AG04450 (cell line): ENCODE measurements at regions of chr14 and their contacts with region 1.

Region 1: DNA sequence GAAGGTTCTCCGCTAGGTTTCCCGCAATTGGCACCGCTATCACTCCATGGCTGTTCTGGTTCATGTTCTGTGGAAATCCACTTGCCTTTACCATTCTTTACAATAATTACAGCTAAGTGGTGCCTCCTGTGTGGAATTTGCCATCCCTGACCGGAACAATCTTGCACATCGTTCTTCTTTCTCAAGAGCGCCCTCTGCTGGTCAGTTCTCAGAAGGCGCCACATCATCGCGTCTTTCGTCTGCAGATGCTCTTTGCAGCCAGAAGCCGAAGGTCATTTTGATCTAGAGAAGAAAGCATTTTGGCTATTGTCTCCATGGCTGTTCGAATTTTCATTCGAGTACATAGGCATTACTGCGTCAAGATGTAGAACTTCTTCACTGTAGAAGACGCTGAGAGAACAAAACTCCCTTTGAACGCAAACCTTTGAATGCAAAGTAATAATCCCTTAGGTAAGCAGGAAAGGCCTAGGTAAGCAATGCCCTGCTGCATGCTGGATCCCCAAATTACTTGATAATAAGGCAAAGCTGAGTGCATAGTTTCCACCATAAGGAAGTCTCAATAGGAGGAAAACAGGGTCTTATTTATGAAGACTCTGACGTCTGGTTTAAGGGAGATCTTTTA is 10.1 kb upstream of the RTRAF start:
- DNase-seq: peak; percentile 55
- H3K4me3 ChIP-seq: no peak overlapping the region
- H3K27ac ChIP-seq: no peak overlapping the region
- H3K27me3 ChIP-seq: peaks cover 2% of the 10 kb centered on the region
- CTCF ChIP-seq: peak; percentile 89

Region 2: GRCh38 chr14:51780006-51780692 is 199.1 kb before region 1 on chr14:
- CTCF ChIA-PET with region 1: interaction called, 56 read pairs
- POLR2A ChIA-PET with region 1: no interaction called
- DNase-seq: peak; percentile 24
- H3K4me3 ChIP-seq: peak overlapping the region; percentile 31; the same call in 1 of the 2 replicates
- H3K27ac ChIP-seq: no peak overlapping the region
- H3K27me3 ChIP-seq: no peaks in the 10 kb centered on the region
- CTCF ChIP-seq: peak; percentile 71

Region 3: DNA sequence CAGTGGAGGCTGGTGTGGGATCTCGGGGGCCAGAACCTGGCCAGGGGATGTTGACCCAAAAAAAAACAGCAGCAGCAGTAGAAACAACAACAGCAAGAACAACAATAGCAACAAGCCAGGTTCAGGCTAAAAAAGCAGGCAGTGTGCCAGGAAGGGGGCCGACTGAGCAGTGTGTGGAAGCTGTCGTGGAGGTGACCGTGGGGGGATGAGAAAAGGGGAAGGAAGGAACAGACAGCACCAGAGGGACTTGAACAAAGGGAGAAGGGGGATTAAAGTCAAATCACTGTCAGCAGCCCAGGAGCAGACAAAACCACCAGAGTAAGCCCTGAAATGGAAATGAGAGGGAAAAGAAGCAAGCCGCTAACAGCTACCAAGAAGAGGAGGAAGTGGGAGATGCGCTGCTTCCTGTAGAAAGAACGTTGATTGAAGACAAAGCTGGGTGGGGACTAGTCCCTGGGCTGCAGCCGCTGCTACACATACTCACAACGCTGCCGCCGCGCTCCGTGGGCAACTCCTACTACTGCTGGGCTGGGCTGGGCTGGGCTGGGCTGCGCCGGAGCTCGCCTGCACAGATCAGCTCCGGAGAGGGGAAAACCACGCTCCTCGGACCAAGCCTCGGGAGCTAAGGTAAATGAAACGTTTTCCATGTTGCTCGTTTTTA is 118.9 kb before region 1 on chr14 and contains the start of gene GNG2:
- CTCF ChIA-PET with region 1: interaction called, 25 read pairs
- POLR2A ChIA-PET with region 1: no interaction called
- DNase-seq: no peak
- H3K4me3 ChIP-seq: peak within 1 kb of the TSS; percentile 66
- H3K27ac ChIP-seq: peak within 1 kb of the TSS; percentile 31
- H3K27me3 ChIP-seq: no peaks in the 10 kb centered on the region
- CTCF ChIP-seq: no peak
- polyA plus RNA-seq, gene GNG2: 59.3 and 83.9 TPM in 2 replicates

Region 4: GRCh38 chr14:51996148-51996746 is 17.0 kb after region 1 on chr14:
- CTCF ChIA-PET with region 1: interaction called, 11 read pairs
- POLR2A ChIA-PET with region 1: no interaction called
- DNase-seq: no peak
- H3K4me3 ChIP-seq: no peak overlapping the region
- H3K27ac ChIP-seq: no peak overlapping the region
- H3K27me3 ChIP-seq: no peaks in the 10 kb centered on the region
- CTCF ChIP-seq: peak; percentile 75